Activated CD4-positive, alpha-beta T cell treated with anti-CD3 and anti-CD28 coated beads for 36 hours (primary cell): ENCODE measurements at regions of chr11 and their contacts with region 1.

Region 1: GRCh38 chr11:9613118-9613829 is 39.8 kb downstream of the WEE1 start:
- DNase-seq: peak; percentile 94
- ATAC-seq: peak; percentile 64
- H3K4me3 Mint-ChIP-seq: peak overlapping the region; percentile 76
- H3K27ac Mint-ChIP-seq: peak overlapping the region; percentile 98
- H3K4me1 Mint-ChIP-seq: peaks cover 46% of the 10 kb centered on the region
- H3K27me3 Mint-ChIP-seq: no peaks in the 10 kb centered on the region

Region 2: DNA sequence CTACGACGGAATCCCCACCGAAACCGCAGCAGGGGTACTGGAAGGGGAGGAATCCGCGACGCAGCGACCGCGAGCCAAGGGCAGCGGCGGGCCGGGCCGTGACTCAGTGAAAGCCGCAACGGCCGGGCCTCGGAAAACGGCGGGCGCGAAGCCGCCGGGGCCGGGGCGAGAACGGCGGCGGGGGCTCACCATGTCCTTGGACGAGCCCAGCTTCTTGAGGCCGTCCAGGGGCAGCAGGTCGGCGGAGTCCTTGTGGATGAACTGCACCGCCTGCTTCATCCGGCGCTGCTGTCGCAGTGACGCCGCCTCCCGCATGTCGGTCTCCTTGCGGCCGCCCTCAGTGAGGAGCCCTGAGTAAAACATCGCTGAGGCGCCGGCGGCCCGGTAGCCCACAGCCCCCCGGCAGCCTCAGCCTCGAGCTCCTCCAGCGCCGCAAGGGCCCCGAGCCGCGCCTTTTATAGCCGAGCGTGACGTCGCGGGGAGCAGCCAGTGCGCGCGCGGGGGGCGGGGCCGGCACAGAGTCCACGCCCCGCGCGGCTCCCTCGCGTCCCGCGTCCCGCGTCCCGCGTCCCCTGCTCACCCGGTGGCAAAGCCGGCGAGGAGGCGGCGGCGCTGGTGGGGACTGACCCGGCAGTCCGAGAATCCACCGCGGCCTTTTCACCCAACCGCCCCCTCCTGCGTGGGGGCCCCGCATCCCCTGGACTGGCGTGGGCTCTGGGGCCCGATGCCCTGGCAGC is 609.5 kb before region 1 on chr11 and contains the start of gene NRIP3:
- CTCF ChIA-PET with region 1: no interaction called
- POLR2A ChIA-PET with region 1: no interaction called
- intact Hi-C with region 1: loop called in 1 of 2 experiments (anchors 5 kb)
- DNase-seq: peak; percentile 82
- ATAC-seq: peak; percentile 41
- H3K4me3 Mint-ChIP-seq: peak within 1 kb of the TSS; percentile 65
- H3K27ac Mint-ChIP-seq: peak within 1 kb of the TSS; percentile 38
- H3K4me1 Mint-ChIP-seq: peaks cover 27% of the 10 kb centered on the region
- H3K27me3 Mint-ChIP-seq: peaks cover 34% of the 10 kb centered on the region
- total RNA-seq, gene NRIP3: 2.1 to 2.2 TPM

Region 3: GRCh38 chr11:9534791-9535781 is 78.2 kb before region 1 on chr11:
- CTCF ChIA-PET with region 1: interaction called, 44 read pairs
- POLR2A ChIA-PET with region 1: interaction called, 3 read pairs
- intact Hi-C with region 1: loop called (anchors 1 kb)
- DNase-seq: peak; percentile 91
- ATAC-seq: peak; percentile 71
- H3K4me3 Mint-ChIP-seq: no peak overlapping the region
- H3K27ac Mint-ChIP-seq: no peak overlapping the region
- H3K4me1 Mint-ChIP-seq: no peaks in the 10 kb centered on the region
- H3K27me3 Mint-ChIP-seq: no peaks in the 10 kb centered on the region

Region 4: DNA sequence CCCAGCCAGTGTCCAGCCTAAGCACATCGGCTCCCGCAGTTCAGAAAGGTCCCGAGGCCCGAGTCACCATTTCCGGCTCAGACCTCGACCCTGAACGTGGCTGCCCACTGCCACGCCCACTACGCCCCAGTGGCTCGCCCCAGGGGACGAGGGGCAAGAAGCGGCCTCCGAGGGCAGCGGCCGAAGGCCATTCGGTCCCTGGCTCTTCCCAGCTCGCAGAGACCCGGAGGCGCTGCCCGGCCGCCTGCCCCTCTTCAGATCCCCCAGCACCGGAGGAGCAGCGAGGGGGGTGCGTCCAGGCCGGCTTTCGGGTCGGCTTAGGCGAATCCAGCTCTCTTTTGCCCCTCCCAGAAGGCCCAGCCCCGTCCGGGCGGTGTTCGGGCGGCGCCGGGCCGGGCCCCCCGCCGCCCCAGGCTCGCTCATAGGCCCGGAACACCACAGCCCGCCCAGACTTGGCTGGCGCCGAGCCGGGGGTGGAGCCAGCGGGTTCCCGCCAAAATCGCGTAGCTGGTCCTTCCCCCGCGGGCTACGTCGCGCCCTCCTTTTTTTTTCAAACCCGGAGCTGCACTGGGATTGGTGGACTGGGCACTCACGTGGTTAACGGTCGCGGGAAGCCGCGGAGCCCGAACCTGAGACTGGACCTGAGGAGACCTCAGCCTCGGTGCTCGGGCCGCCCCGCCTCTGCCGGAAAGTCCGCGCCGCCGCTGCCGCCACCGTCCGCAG is 40.1 kb before region 1 on chr11 and contains the start of gene WEE1:
- CTCF ChIA-PET with region 1: interaction called, 37 read pairs
- POLR2A ChIA-PET with region 1: interaction called, 21 read pairs
- intact Hi-C with region 1: loop called (anchors 1 to 2 kb)
- DNase-seq: peak; percentile 99
- ATAC-seq: peak; percentile 94
- H3K4me3 Mint-ChIP-seq: peak within 1 kb of the TSS; percentile 94
- H3K27ac Mint-ChIP-seq: peak within 1 kb of the TSS; percentile 82
- H3K4me1 Mint-ChIP-seq: peaks cover 33% of the 10 kb centered on the region
- H3K27me3 Mint-ChIP-seq: peaks cover 3% of the 10 kb centered on the region
- total RNA-seq, gene WEE1: 44.8 to 46.5 TPM

Region 5: DNA sequence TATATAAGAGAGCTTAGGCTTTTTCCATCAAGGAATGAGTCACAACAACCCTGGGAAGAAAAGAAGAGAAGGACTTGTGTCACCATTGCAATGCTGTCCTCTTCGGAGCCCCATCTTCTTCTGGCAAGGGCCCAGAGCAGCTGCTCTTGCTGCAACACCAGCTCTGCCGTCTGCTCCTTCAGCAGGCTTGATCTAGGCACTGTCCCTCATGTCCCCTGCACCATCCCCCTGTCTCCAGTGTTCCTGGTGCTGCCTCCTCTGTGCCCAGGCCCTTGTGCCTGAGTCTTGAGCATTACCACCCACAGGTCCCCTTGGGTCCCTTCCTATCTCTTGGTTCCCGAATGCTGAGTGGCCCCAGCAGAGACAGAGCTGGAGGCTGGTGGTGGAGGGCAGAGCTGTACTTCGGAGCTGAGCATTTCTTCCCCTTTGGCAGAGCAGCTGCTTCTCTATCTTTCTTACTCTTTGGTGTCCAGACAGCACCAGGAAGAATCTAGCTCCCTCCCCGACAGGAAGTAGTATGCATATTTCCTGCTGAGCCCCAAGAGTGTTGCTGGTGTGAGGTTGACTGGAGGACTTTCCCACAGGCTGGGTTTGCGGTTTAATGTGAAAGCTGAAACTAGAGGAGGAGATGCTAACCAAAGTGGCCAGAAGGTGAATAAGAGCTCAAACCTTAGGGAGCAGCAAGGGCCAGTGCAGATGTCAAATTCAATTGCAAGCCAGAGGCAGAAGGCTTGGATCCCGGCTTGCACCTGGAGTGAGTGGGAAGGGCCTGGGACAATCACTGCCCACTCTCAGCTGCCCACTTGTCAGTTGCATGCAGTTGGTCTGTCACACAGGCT is 12.0 kb before region 1 on chr11:
- CTCF ChIA-PET with region 1: interaction called, 58 read pairs
- POLR2A ChIA-PET with region 1: interaction called, 9 read pairs
- intact Hi-C with region 1: loop called (anchors 1 kb)
- DNase-seq: peak; percentile 86
- ATAC-seq: peak; percentile 89
- H3K4me3 Mint-ChIP-seq: peak overlapping the region; percentile 65
- H3K27ac Mint-ChIP-seq: peak overlapping the region; percentile 91
- H3K4me1 Mint-ChIP-seq: peaks cover 25% of the 10 kb centered on the region
- H3K27me3 Mint-ChIP-seq: no peaks in the 10 kb centered on the region

Region 6: DNA sequence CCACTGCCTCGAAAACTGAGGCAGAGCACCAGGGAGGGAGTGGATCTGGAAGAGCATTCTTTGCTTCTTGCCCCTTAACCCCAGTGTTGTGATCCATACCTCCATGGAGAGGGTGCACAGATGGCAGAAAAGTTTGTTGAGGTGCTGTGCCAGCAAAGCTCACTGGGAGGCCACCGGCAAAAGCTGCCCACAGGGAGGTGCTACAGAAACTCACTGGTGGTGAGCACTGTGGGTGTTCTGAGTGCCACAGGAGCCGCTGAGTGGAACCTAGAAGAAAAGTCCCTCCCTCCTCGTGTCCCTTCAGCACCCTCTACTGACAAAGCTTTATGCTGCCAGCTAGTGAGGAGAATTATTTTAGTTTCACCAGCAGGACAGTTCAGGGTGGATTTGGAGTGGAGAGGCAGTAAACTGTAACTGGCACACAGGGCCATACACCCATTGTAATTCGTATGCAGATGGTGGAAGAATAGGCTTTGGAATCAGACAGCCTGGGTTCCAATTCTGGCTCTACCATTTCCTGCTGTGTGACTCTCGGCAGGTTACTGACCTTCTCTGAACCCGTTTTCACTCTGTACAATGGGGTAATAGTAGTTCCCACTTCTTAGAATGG is 135.2 kb after region 1 on chr11:
- CTCF ChIA-PET with region 1: interaction called, 18 read pairs
- POLR2A ChIA-PET with region 1: interaction called, 3 read pairs
- intact Hi-C with region 1: loop called (anchors 1 to 2 kb)
- DNase-seq: peak; percentile 81
- ATAC-seq: peak; percentile 99
- H3K4me3 Mint-ChIP-seq: no peak overlapping the region
- H3K27ac Mint-ChIP-seq: no peak overlapping the region
- H3K4me1 Mint-ChIP-seq: peaks cover 20% of the 10 kb centered on the region
- H3K27me3 Mint-ChIP-seq: no peaks in the 10 kb centered on the region

Region 7: GRCh38 chr11:10322830-10323792 is 709.8 kb after region 1 on chr11:
- CTCF ChIA-PET with region 1: no interaction called
- POLR2A ChIA-PET with region 1: no interaction called
- intact Hi-C with region 1: loop called in 1 of 2 experiments (anchors 5 kb)
- DNase-seq: peak; percentile 71
- ATAC-seq: peak; percentile 84
- H3K4me3 Mint-ChIP-seq: peak overlapping the region; percentile 26
- H3K27ac Mint-ChIP-seq: peak overlapping the region; percentile 86
- H3K4me1 Mint-ChIP-seq: peaks cover 16% of the 10 kb centered on the region
- H3K27me3 Mint-ChIP-seq: peaks cover 2% of the 10 kb centered on the region